PC-9 (cell line): ENCODE measurements at regions of chr13 and their contacts with region 1.

Region 1: GRCh38 chr13:106373989-106374572 is 161.4 kb downstream of the EFNB2 start:
- DNase-seq: no peak
- H3K4me3 ChIP-seq: no peak overlapping the region
- H3K27ac ChIP-seq: no peak overlapping the region
- H3K4me1 ChIP-seq: peaks cover 21% of the 10 kb centered on the region
- H3K27me3 ChIP-seq: no peaks in the 10 kb centered on the region
- CTCF ChIP-seq: no peak

Region 2: GRCh38 chr13:106337096-106337850 is 36.8 kb before region 1 on chr13:
- CTCF ChIA-PET with region 1: no interaction called
- POLR2A ChIA-PET with region 1: no interaction called
- intact Hi-C with region 1: no loop called
- DNase-seq: peak in 1 of 2 experiments; percentile 69
- H3K4me3 ChIP-seq: no peak overlapping the region
- H3K27ac ChIP-seq: no peak overlapping the region
- H3K4me1 ChIP-seq: no peaks in the 10 kb centered on the region
- H3K27me3 ChIP-seq: no peaks in the 10 kb centered on the region
- CTCF ChIP-seq: no peak

Region 3: DNA sequence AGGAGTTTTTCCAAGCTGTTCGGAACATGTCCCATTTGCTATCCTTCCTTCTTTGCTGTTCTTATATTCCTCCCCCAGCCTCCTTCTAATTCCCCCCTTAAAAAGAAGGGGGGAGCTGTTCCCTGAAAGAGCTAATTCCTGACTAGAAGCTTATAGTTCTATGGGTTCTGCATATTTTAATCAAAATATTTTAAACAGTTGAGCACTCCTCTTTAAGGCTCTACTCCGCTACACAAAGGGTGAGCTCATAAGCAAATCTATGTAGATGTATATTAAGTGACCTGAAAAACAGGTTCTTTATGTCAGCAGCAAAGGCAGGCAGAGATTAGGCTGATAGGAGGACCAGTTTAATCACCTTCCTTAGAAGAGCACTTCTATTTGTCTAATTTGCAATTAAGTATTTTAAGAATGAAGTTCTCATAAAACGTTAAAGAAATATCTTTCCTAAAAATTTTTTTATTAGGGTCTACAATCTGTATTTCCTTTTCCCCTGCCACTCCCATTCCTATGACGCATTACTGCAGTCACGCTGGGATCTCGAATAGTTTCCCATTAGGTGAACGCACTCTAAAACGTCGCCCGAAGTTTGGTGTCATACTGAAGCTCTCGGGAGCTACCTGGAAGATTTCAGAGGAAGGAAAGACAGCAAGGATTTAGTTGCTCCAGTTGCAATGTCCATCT is 156.2 kb after region 1 on chr13:
- CTCF ChIA-PET with region 1: no interaction called
- POLR2A ChIA-PET with region 1: no interaction called
- intact Hi-C with region 1: loop called (anchors 2 kb)
- DNase-seq: peak; percentile 43 to 92
- H3K4me3 ChIP-seq: peak overlapping the region; percentile 72
- H3K27ac ChIP-seq: peak overlapping the region; percentile 83
- H3K4me1 ChIP-seq: peaks cover 53% of the 10 kb centered on the region
- H3K27me3 ChIP-seq: no peaks in the 10 kb centered on the region
- CTCF ChIP-seq: no peak

Region 4: DNA sequence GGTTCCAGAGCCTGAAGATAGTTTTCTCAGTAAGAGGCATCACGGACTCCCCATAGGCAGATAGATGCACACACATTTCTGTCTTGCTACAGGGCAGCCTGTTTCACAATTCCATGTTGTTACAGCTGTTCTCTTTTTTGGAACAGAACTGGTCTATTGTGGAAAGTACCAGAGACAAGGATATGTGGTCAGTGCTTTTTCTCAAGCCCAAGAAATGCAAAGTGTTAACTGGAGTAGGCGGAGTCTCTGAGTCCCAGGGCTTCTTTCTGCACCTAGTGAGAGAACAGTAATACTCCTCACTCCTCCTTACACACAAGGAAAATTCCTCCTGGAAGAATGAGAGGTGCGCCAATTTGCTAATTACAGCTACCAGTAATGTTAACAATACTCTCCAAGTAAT is 335.4 kb after region 1 on chr13:
- CTCF ChIA-PET with region 1: no interaction called
- POLR2A ChIA-PET with region 1: no interaction called
- intact Hi-C with region 1: no loop called
- DNase-seq: no peak
- H3K4me3 ChIP-seq: no peak overlapping the region
- H3K27ac ChIP-seq: no peak overlapping the region
- H3K4me1 ChIP-seq: no peaks in the 10 kb centered on the region
- H3K27me3 ChIP-seq: no peaks in the 10 kb centered on the region
- CTCF ChIP-seq: no peak

Region 5: GRCh38 chr13:106786006-106786563 is 412.0 kb after region 1 on chr13:
- CTCF ChIA-PET with region 1: no interaction called
- POLR2A ChIA-PET with region 1: no interaction called
- intact Hi-C with region 1: no loop called
- DNase-seq: no peak
- H3K4me3 ChIP-seq: no peak overlapping the region
- H3K27ac ChIP-seq: no peak overlapping the region
- H3K4me1 ChIP-seq: peaks cover 11% of the 10 kb centered on the region
- H3K27me3 ChIP-seq: no peaks in the 10 kb centered on the region
- CTCF ChIP-seq: no peak